ENCODE measurements at regions of chr4 and their contacts with region 1.

Region 1: GRCh38 chr4:168475745-168476144 is 4.5 kb downstream of the DDX60L start:
- DNase-seq: no peak
- H3K4me3 ChIP-seq: no peak overlapping the region
- H3K27ac ChIP-seq: no peak overlapping the region
- H3K4me1 ChIP-seq: no peaks in the 10 kb centered on the region
- H3K27me3 ChIP-seq: no peaks in the 10 kb centered on the region
- CTCF ChIP-seq: no peak
- POLR2A ChIP-seq: no peak

Region 2: GRCh38 chr4:168309781-168310180 is 166.0 kb before region 1 on chr4:
- intact Hi-C with region 1: loop called in 1 of 2 experiments (anchors 5 kb)
- DNase-seq: peak in 3 of 7 donors; percentile 10 to 16 (median 14)
- H3K4me3 ChIP-seq: no peak overlapping the region
- H3K27ac ChIP-seq: peak overlapping the region in 1 of 5 donors; percentile 5
- H3K4me1 ChIP-seq: peaks cover 0 to 11% of the 10 kb centered on the region in 2 donors
- H3K27me3 ChIP-seq: no peaks in the 10 kb centered on the region
- CTCF ChIP-seq: no peak
- POLR2A ChIP-seq: no peak

Region 3: GRCh38 chr4:168942985-168943384 is 467.2 kb after region 1 on chr4:
- intact Hi-C with region 1: no loop called
- DNase-seq: no peak
- H3K4me3 ChIP-seq: no peak overlapping the region
- H3K27ac ChIP-seq: no peak overlapping the region
- H3K4me1 ChIP-seq: no peaks in the 10 kb centered on the region
- H3K27me3 ChIP-seq: no peaks in the 10 kb centered on the region
- CTCF ChIP-seq: peak in 1 of 6 experiments; percentile 18
- POLR2A ChIP-seq: no peak